ENCODE measurements at regions of chr14 and their contacts with region 1.

Region 1: DNA sequence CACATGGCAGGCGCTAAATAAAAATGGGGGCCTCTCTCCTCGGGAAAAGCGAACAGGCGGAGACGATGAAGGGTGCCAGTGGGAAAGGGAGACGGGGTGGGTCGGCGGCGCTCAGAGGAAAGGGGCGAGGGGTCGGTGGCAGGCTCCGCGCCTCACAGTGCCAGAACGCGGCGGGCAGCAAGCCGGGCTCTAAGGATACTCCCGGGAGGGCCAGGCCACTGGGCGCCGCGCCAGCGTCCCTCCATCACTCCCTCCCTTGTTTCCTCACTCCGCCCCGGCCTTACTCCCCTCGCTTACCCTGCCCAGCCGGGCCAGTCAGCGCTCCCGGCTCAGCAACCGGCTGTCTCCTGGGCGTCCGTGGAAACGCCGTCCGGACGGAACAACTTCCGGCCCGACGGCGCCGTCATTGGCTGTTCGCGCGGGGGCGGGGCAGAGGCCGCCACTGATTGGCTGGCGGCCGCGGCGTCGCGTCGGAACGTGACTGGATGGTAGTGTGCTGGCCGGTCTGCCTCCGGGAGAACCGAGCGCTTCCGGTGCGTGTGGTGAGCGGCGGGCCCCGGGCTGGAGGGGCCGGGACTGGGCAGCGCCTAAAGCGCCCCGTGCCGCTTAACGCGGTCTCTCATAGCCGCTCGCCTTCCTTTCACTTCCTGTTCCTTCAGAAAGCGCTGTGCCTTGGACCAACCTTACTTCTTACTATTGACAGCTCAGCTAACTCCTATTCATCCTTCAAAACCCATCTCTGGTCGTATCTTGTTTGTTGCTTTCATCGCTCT is 53.0 kb downstream of the SLC25A47 start:
- DNase-seq: peak; percentile 97
- ATAC-seq: peak; percentile 97

Region 2: GRCh38 chr14:99982537-99983250 is 393.5 kb before region 1 on chr14:
- intact Hi-C with region 1: loop called (anchors 5 kb)
- DNase-seq: no peak
- ATAC-seq: peak; percentile 91

Region 3: DNA sequence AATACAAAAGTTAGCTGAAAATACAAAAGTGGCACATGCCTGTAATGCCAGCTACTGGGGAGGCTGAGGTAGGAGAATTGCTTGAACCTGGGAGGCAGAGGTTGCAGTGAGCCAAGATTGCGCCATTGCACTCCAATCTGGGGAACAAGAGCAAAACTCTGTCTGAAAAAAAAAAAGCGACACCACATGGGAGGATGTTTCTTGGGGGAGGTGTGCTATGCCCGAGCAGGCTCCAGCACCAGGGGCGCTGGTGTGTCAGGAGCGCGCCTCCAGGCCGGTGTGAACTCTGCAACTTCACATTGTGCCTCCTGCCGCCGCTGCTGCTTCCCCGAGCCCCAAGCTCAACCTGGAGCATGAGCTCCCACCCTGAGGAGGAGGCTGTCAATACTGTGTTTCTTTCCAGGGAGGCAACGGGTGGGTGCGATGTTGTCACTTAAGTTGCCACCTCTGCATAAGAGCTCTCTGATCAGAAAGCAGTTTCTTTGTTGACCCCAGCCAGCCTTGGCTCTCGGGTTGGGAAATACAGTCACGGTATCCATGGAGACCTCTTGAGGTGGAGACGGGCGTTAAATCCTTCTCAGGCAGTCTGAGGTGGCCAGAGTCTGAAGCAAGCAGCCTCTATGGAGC is 235.6 kb before region 1 on chr14:
- intact Hi-C with region 1: loop called (anchors 10 kb)
- DNase-seq: no peak
- ATAC-seq: no peak

Region 4: DNA sequence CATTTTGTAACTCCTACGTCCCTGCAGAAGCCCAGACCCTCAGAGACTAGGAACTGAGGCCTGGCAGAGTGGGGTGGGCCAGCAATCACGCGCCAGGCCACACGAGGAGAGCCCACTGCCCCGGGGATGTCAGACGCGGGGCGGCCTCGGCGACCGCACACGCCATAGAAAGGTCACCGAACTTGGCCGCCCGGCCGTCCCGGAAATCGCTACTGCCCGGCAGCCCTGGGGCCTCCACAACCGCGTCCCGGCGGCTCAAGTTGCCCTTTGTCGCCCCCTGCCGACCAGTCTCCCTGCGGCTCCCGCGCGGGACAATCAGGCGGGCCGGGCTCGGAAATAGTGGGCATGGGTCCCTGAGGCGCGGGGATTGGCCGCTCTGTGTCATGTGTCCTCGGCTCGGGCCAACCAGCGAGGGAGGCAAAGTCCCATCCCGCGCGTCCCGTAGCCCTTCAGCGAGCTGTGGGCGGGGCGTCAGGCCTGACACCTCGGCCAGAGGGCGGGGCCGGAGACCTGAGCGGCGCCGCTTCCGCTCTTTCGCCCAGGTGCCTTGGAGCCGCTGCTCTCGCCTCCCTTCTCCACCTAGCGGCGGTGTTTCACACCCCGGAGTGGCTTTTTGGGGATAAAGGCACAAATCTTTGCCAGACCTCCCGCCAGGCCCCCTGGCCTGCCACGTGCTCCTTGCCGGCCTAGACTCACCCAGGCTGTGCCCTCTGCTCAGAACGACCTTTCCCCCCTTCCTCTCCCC is 183.3 kb before region 1 on chr14:
- intact Hi-C with region 1: loop called (anchors 5 kb)
- DNase-seq: peak; percentile 100
- ATAC-seq: peak; percentile 99

Region 5: DNA sequence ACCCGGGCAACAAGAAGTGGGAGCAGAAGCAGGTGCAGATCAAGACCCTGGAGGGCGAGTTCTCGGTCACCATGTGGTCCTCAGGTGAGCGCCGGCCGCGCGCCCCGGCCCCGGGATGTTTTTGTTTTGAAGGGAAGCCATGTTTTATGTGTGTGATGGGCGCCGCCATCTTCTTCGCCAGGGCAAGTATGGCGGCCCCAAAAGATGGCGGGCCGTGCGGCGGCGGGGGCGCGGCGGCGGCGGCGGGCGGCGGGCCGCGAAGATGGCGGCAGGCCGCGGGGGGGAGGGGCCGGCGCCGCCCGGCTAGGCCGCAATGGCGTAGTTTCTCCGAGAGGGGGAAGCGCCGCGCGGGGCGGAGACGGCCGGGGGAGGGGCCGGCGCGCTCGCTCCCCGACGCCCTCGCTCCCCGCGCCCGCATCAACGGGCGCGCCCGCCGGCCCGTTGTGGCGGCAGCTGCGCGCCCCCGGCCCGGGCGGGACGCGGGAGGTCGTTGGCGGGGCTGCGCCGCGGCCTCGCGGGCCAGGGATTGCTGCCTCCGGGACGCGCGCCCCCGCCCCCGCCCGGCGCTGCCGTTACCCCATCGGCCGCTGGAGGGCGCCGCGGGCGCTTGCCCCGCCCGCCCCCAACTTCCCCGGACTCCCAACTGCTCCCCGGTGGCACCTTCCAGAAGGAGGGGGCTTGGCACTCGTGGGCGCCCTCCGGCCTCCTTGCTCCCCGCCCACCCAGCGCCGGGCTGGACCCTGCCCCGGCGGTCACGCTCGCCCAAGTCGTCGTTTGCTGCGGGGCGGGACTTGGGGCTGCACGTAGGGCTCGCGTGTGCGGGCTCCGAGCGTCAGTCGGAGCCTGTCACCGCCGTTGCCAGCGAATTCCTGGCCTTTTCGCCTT is 136.1 kb before region 1 on chr14:
- intact Hi-C with region 1: loop called (anchors 2 kb)
- DNase-seq: peak; percentile 93
- ATAC-seq: peak; percentile 70

Region 6: DNA sequence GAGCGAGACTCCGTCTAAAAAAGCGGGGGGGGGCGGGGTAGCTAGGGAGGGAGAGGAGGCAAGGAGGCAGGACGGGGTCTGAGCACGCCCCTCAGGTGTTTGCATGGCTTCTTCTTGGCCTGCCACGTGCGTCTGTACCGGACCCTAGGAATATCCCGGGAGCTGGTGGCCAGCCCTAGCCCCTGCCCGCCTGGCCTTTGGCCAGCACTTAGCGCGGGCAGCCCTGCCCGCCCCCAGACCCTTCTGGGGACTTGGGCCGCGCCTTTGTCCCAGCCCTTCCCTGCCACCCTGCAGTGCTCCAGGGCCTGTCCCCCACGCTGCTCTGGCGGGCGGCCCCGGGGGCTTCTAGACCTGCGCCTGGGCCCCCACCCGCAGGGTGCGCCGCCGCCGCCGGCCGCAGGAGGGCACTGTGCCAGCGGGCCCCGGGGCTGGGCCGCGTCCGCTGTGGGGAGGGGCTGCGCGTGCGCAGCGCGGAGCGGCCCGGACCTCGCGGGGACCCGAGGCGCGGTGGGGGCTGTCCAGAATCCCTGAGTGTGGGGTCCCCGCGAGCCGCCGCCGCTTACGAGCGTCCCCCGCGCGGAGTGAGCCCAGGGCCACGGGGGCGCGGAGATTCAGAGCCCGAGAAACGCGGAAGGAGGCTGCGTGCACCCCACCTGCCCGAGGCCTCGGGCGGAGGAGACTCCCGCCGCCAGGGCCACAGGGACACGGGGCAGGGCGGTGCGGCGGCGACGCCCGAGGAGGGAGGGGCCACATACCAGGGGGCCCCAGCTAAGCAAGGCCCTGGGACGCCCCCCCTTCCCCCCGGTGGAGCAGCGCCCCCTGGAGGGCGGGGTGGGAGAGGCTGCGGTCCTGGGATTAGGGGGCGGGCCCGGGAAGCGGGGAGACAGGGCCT is 90.9 kb before region 1 on chr14:
- intact Hi-C with region 1: loop called (anchors 5 kb)
- DNase-seq: peak; percentile 88
- ATAC-seq: peak; percentile 90

Region 7: DNA sequence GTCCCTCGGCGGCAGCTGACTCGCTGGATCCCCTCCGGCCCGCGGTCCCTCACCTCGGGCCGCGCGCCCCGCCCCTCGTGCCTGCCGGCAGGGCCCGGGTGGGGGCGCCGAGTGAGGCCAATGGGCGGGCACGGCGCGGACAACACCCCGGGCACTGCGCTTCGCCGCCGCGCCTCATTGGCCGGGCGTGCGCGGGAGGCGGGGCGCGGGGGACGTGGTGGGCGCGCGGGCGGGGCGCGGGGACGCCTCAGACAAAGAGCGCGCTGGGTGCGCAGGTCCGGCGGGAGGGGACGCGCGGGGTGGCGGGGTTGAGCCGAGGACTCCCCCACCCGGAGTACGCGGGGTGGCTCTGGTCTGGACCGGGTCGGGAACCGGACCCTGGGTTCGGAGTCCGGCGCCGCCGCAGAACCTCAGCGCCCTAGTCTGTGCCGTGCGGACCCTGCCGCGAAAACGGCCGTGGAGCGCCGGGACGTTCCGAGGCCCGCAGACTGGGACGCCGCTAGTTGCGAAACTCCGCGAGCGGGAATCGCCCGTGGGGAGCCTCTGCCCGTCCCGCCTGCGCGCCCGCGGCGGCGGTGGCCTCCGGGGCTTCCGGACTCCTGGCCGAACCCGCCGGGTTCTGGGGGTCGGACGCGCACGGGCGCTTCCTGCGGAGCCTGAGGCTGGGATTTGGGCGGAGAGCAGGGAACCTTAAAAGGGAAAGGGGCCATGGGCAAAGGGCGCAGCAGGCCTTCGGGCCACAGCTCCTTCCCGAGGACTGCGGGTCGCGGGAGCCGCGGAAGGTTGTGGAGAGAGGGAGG is 69.5 kb before region 1 on chr14 and contains the start of gene SLC25A29:
- intact Hi-C with region 1: loop called (anchors 1 kb)
- DNase-seq: peak; percentile 94
- ATAC-seq: peak; percentile 94
- total RNA-seq, gene SLC25A29: 18.6 TPM

Region 8: GRCh38 chr14:100621806-100622205 is 245.7 kb after region 1 on chr14:
- intact Hi-C with region 1: no loop called
- DNase-seq: no peak
- ATAC-seq: no peak